Mammary epithelial cell (primary cell): ENCODE measurements at regions of chr20 and their contacts with region 1.

Region 1: DNA sequence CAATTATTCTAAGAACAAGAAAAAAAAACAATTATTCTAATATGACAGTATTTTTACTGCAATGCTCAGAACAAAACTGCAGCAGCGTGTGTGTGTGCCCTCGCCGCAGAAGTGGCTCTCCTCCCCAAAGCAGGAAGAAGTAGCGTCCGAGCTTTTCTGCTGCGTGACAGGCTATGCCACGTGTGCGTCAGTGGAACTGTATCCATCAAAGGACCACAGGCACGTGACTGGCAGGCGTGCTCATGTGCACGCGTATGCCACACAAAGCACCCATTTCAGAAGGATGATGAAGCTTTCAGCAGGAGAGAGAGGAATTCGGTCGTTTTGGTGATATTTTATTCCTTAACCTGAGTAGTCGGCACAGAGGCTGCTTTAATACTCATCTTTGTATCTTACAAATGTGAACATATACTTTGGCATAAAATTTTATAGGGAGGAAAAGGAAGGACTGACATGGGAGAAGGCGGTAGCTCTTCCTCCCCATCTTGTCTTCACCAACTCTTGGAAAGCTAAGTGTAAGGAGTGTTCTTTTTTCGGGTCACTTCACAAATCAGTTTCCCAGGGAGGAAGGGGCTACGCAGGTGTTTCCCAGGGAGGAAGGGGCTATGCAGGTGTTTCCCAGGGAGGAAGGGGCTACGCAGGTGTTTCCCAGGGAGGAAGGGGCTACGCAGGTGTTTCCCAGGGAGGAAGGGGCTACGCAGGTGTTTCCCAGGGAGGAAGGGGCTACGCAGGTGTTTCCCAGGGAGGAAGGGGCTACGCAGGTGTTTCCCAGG is 3.4 kb downstream of the TCFL5 start:
- DNase-seq: no peak
- H3K4me3 ChIP-seq: no peak overlapping the region
- H3K27ac ChIP-seq: no peak overlapping the region
- H3K4me1 ChIP-seq: peaks cover 25% of the 10 kb centered on the region
- H3K27me3 ChIP-seq: no peaks in the 10 kb centered on the region
- CTCF ChIP-seq: no peak

Region 2: GRCh38 chr20:62652051-62652926 is 206.0 kb before region 1 on chr20:
- CTCF ChIA-PET with region 1: no interaction called
- dilution Hi-C with region 1: no loop called
- in situ Hi-C with region 1: no loop called
- intact Hi-C with region 1: no loop called
- DNase-seq: peak; percentile 95
- H3K4me3 ChIP-seq: peak overlapping the region in 2 of 3 experiments; percentile 9 to 17
- H3K27ac ChIP-seq: peak overlapping the region; percentile 65
- H3K4me1 ChIP-seq: peaks cover 13% of the 10 kb centered on the region
- H3K27me3 ChIP-seq: no peaks in the 10 kb centered on the region
- CTCF ChIP-seq: no peak

Region 3: DNA sequence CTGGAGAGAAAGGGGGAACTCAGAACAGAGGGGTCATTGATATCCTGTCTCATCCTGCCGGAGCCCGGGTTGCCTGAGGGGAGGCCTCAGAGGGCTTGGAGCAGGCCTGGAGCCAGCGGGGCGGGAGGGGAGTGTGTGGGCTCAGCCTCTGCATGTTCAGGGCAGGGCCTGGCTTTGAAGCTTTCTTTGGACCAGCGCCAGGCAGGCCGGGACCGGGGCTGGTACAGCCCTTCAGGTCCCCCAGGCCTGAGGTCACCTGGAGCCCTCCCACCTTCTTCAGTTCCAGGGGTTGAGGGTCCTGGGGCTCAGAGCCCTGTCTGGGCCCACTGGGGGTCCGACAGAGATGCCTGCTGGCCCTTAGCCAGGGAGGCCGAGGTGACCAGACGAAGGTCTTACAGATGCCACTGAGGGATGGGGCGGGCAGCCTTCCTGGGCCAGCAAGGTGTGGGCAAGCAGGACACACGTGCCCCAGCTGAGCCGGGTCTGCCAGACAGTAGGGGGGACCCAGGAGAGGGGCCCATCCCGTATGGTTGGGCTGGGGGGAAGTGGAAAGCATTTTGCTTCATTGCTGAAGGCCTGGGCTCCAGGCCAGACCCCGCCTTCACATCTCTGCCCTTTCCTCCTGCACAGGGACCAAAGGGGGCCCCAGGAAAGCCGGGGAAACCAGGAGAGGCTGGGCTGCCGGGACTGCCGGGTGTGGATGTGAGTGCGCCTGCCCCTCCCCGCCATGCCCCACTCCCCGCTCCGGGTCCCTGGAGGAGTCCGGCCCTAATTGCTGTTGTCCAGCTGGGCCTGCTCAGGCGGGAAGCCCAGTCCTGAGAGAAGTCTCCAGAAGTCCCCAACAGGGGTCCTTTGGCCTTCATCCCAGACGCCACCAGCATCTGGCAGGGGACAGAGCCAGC is 39.4 kb before region 1 on chr20:
- CTCF ChIA-PET with region 1: no interaction called
- dilution Hi-C with region 1: loop called (anchors 5 kb)
- in situ Hi-C with region 1: no loop called
- intact Hi-C with region 1: no loop called
- DNase-seq: peak; percentile 52
- H3K4me3 ChIP-seq: no peak overlapping the region
- H3K27ac ChIP-seq: no peak overlapping the region
- H3K4me1 ChIP-seq: peaks cover 39% of the 10 kb centered on the region
- H3K27me3 ChIP-seq: peaks cover 7% of the 10 kb centered on the region
- CTCF ChIP-seq: no peak

Region 4: DNA sequence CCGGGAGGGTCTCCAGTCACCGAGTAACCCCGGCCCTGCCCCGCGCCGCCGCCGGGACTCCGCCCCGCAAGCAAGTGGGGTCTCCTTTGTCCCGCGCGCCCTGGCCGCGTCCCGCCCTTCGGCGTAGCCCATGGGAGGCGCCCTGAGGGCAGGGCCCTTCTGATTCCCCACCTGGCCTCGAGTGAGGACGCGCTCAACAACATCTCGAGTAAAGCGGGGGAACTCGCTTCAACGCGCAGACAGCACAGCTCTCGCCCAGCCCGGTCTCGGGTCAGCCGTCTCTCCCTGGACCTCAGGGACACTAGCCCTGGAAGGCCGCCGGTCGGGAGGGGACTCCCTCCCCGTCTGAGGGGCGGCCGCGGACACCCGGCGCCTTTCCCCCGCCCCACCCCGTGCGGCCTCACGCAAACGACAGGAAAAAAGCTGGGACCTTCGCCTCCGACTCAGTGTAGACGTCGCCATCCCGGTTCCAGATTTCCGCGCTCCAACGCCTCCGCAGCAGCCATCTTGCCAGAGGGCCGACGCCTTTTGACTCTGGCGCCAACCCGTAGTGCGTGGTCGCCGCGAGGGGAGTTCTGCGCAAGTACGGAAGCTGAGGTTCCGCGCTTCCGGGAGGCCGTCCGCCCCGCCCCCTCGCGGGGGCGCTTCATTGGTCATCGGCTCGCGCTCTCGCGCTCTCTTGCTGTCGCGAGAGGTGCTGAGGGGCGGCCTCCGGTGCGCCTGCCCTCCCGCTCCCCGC is 79.3 kb after region 1 on chr20:
- CTCF ChIA-PET with region 1: no interaction called
- dilution Hi-C with region 1: loop called (anchors 5 kb)
- in situ Hi-C with region 1: no loop called
- intact Hi-C with region 1: no loop called
- DNase-seq: peak; percentile 93
- H3K4me3 ChIP-seq: peak overlapping the region; percentile 95 to 100 (median 97)
- H3K27ac ChIP-seq: peak overlapping the region; percentile 87
- H3K4me1 ChIP-seq: peaks cover 15% of the 10 kb centered on the region
- H3K27me3 ChIP-seq: no peaks in the 10 kb centered on the region
- CTCF ChIP-seq: no peak